ENCODE measurements at regions of chr16 and their contacts with region 1.

Region 1: GRCh38 chr16:57899771-57900661 is 70.9 kb downstream of the CNGB1 start:
- DNase-seq: peak; percentile 85
- ATAC-seq: peak; percentile 80

Region 2: GRCh38 chr16:57432989-57433388 is 467.0 kb before region 1 on chr16:
- intact Hi-C with region 1: no loop called
- DNase-seq: no peak
- ATAC-seq: no peak

Region 3: GRCh38 chr16:57999366-57999970 is 99.5 kb after region 1 on chr16:
- intact Hi-C with region 1: no loop called
- DNase-seq: no peak
- ATAC-seq: no peak

Region 4: DNA sequence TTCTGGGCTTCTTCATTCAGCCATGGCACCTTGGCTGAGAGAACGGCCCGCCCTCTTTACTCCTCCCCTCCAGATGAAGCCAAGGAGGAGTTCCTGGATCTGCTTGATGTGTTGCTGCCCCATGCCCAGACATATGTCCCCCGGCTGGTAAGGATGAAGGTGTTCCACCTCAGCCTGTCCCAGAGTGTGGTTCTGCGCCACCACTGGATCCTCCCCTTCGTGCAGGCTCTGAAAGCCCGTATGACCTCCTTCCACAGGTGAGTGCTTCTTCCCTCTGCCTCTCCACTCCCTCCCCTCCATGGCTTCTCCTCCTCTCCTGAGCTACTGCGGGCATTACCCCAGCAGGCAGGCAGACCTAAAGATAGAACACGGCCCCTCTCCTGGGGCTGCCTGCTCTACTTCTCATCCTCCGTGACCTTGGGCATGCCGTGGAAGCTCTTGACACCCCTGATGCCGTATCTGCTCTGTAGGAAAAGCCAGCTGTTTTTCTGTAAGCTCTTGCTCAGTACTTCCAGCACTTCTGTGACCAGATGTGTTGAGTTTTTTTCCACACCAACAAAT is 109.9 kb after region 1 on chr16:
- intact Hi-C with region 1: loop called (anchors 5 kb)
- DNase-seq: no peak
- ATAC-seq: peak; percentile 77